ENCODE measurements at regions of chr4 and their contacts with region 1.

Region 1: GRCh38 chr4:103451341-103451740 is 253.2 kb upstream of the CENPE start:
- DNase-seq: peak; percentile 8 to 91
- H3K4me3 ChIP-seq: peak overlapping the region; percentile 35; the same call in 1 of the 2 replicates
- H3K27ac ChIP-seq: peak overlapping the region; percentile 55
- H3K4me1 ChIP-seq: peaks cover 10% of the 10 kb centered on the region
- H3K27me3 ChIP-seq: no peaks in the 10 kb centered on the region
- CTCF ChIP-seq: no peak

Region 2: GRCh38 chr4:103046416-103047290 is 404.7 kb before region 1 on chr4:
- CTCF ChIA-PET with region 1: no interaction called
- POLR2A ChIA-PET with region 1: no interaction called
- intact Hi-C with region 1: no loop called
- DNase-seq: peak in 1 of 2 experiments; percentile 3
- H3K4me3 ChIP-seq: no peak overlapping the region
- H3K27ac ChIP-seq: no peak overlapping the region
- H3K4me1 ChIP-seq: no peaks in the 10 kb centered on the region
- H3K27me3 ChIP-seq: no peaks in the 10 kb centered on the region
- CTCF ChIP-seq: peak; percentile 61

Region 3: DNA sequence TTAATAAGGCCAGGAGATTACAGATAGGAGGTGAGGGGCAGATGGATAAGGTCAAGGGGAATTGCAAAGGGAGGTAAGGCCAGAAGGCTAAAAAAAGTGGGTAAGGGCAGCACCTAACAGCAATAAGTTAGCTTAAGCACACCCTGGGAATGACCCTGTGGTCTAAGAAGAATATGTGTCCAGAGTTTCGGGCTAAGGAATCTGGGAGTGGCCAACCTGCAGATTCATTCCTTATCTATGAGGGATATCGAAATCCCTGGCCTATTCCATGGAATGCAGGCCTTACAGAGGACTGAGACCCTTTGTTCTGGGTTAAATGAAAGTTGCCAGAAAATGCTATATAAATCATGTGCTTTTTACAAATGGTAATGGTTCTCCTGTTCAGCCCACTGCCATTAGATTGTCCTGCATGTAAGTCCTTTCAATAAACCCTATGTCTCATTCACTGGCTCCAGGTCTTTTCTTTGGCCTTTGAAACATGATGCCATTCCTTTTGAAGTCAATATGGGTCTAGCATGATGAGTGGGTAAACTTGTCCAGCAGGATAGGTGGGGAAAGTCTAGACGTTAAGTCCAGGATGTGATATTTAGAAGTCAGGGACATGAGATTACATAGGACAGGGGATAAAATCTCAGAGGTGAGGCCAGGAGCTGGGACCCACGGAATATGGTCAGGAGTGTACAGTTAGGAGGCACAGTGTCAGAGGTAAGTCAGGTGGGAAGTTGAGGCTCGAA is 42.3 kb after region 1 on chr4:
- CTCF ChIA-PET with region 1: no interaction called
- POLR2A ChIA-PET with region 1: no interaction called
- intact Hi-C with region 1: loop called (anchors 2 kb)
- DNase-seq: peak; percentile 41 to 75
- H3K4me3 ChIP-seq: no peak overlapping the region
- H3K27ac ChIP-seq: peak overlapping the region; percentile 68
- H3K4me1 ChIP-seq: peaks cover 37% of the 10 kb centered on the region
- H3K27me3 ChIP-seq: no peaks in the 10 kb centered on the region
- CTCF ChIP-seq: no peak